Activated CD8-positive, alpha-beta T cell treated with anti-CD3 and anti-CD28 coated beads for 36 hours (primary cell): ENCODE measurements at regions of chr11 and their contacts with region 1.

Region 1: DNA sequence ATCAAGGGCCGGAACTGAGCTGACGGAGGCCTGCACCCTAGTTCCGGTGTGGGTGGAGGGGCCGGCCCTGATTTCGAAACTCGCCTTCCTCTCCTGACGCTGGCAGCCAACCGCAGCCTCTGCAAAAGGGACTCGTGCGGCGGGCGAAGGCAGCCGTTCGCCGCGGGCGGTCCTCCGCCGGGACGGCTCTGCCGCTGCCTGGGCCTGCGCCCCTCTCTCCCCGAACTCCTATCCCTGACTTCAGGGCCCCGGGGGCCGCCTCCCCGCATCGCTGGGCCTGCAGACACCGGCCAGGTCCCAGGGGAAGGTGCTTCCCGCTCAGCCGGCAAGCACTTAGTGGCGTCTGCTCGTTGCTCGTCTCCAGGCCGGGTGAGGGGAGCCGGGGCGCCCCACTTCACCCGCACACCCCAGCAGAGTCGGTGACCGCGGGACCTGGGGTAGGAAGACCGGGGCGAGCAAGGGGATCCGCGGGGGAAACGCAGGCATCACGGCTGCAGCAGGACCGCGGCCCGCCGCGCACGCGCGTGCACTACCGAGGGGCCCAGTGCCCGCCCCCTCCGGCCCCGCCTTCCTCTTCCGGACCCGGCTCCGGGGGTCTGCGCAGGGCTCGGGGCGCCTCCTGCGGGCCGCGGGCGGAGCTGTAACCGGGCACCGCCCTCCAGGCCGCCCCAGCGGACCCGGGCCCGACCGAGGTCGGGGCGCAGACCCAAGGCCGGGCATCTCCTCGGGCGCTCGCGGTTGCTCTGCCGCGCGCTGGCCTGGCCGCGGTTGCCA is 464 bp upstream of the ANKRD13D start:
- DNase-seq: peak; percentile 95
- ATAC-seq: peak; percentile 77
- H3K4me3 Mint-ChIP-seq: peak overlapping the region; percentile 72
- H3K27ac Mint-ChIP-seq: peak overlapping the region; percentile 99
- H3K4me1 Mint-ChIP-seq: peaks cover 58% of the 10 kb centered on the region
- H3K27me3 Mint-ChIP-seq: no peaks in the 10 kb centered on the region
- CTCF ChIP-seq: peak; percentile 41

Region 2: GRCh38 chr11:67213178-67213621 is 75.4 kb before region 1 on chr11:
- CTCF ChIA-PET with region 1: no interaction called
- POLR2A ChIA-PET with region 1: no interaction called
- intact Hi-C with region 1: no loop called
- DNase-seq: no peak
- ATAC-seq: no peak
- H3K4me3 Mint-ChIP-seq: no peak overlapping the region
- H3K27ac Mint-ChIP-seq: no peak overlapping the region
- H3K4me1 Mint-ChIP-seq: peaks cover 12% of the 10 kb centered on the region
- H3K27me3 Mint-ChIP-seq: no peaks in the 10 kb centered on the region
- CTCF ChIP-seq: no peak

Region 3: DNA sequence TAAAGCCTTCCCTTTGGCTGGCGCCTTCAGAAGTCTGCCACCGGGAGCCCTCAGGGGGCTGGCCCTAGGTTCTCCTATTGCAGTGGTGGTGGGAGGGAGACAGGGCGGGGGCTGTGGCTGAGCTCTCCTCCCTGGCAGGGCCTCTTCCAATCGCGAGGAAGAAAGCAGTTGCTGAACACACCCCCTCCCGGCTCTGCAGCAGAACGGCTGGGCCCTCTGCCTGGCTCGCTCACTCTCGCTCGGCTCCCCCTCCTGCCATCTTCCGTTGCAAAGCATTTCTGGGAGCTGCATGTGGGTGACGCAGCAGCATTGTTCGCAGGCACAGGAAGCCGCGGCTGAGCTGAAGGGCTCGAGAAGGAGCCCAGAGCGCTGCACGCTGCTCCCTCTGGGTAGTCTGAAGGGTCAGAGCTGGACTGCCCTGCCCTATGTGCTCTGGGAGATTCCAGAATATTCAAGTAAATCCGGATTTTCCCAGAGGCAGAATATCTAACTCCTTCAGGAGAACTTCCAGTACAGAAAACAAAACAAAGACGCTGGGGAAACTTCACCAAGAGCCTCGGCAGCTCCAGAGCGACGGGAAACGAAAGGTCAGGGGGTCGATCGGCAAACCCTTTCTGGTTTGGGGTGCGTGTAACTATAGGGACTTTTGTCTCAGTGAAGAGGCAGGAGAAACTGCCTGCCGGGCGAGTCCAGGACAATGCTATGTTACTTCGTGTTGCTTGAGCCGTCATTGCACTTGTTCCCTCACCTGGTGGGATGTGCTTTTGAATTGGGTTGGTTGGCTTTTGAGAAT is 48.7 kb before region 1 on chr11:
- CTCF ChIA-PET with region 1: interaction called, 5 read pairs
- POLR2A ChIA-PET with region 1: interaction called, 19 read pairs
- intact Hi-C with region 1: no loop called
- DNase-seq: peak; percentile 98
- ATAC-seq: peak; percentile 94
- H3K4me3 Mint-ChIP-seq: peak overlapping the region; percentile 96
- H3K27ac Mint-ChIP-seq: peak overlapping the region; percentile 100
- H3K4me1 Mint-ChIP-seq: peaks cover 43% of the 10 kb centered on the region
- H3K27me3 Mint-ChIP-seq: no peaks in the 10 kb centered on the region
- CTCF ChIP-seq: no peak

Region 4: GRCh38 chr11:67277231-67277961 is 11.2 kb before region 1 on chr11:
- CTCF ChIA-PET with region 1: interaction called, 55 read pairs
- POLR2A ChIA-PET with region 1: interaction called, 308 read pairs
- intact Hi-C with region 1: no loop called
- DNase-seq: peak; percentile 96
- ATAC-seq: peak; percentile 85
- H3K4me3 Mint-ChIP-seq: peak overlapping the region; percentile 71
- H3K27ac Mint-ChIP-seq: peak overlapping the region; percentile 97
- H3K4me1 Mint-ChIP-seq: peaks cover 53% of the 10 kb centered on the region
- H3K27me3 Mint-ChIP-seq: no peaks in the 10 kb centered on the region
- CTCF ChIP-seq: no peak

Region 5: DNA sequence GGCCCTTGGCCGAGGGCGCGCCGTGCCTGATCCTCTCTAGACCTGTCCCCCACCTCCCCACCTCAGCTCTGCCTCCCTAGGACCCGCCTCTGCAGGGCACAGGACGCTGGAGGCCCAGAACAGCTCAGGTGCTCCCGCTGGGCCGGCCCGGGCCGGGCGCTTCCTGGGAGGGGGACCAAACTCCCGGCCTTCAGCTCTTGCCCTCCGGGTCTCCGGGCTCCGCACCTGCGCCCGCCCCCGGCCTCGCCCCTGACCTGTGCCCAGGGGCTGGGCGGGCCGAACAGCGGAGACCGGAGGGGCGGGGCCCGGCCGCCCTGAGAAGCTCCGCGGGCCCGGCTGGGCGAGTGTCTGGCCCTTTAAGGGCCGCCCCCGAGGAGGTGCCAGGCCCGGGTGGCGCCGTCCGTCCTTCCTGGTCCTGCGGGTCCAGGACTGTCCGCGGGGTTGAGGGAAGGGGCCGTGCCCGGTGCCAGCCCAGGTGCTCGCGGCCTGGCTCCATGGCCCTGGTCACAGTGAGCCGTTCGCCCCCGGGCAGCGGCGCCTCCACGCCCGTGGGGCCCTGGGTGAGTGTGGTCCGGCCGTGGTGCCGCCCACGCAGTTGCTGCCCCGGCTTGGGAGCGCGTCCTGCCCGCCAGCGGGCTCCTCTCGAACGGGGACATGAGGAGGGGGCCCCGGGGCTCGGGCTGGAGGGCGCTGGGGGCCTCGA is 14.6 kb after region 1 on chr11 and contains the start of gene SSH3:
- CTCF ChIA-PET with region 1: interaction called, 4 read pairs
- POLR2A ChIA-PET with region 1: interaction called, 88 read pairs
- intact Hi-C with region 1: no loop called
- DNase-seq: peak; percentile 57
- ATAC-seq: peak; percentile 84
- H3K4me3 Mint-ChIP-seq: peak within 1 kb of the TSS; percentile 59
- H3K27ac Mint-ChIP-seq: no peak within 1 kb of the TSS
- H3K4me1 Mint-ChIP-seq: peaks cover 12% of the 10 kb centered on the region
- H3K27me3 Mint-ChIP-seq: no peaks in the 10 kb centered on the region
- CTCF ChIP-seq: no peak
- total RNA-seq, gene SSH3: 7.4 to 9.1 TPM

Region 6: DNA sequence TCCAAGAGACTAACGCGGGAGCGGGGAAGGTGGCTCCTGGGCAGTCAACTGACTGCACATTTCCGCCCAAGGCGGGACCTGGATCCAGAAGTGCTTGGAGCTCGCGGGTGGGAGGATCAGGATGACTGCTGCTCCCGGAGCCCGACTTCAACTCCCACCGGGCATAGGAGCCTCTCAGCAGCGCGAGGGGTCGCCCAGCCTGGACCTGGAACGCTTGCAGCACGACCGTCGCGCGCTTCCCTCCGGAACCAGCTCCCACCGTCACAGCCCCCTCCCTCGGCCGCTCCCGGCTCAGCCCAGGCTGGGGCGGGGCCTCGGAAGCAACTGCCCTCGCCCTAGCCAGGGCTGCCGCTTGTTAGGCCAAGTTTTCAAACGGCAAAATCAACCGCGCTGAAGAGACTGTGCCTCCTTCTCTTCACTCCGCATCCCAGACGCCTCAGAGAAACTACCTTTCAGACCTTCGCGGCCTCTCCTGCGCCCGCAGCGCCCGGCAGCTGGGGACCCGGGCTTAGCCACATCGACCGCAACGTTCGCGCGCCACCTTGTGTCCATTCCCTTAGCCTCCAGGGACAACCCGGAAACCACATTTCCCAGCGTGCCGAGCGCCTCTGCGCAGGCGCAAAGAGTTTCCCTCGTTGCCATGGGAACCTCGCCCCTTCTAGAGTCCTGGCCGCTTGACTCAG is 28.7 kb after region 1 on chr11:
- CTCF ChIA-PET with region 1: interaction called, 10 read pairs
- POLR2A ChIA-PET with region 1: interaction called, 21 read pairs
- intact Hi-C with region 1: no loop called
- DNase-seq: peak; percentile 98
- ATAC-seq: peak; percentile 91
- H3K4me3 Mint-ChIP-seq: peak overlapping the region; percentile 94
- H3K27ac Mint-ChIP-seq: peak overlapping the region; percentile 97
- H3K4me1 Mint-ChIP-seq: peaks cover 16% of the 10 kb centered on the region
- H3K27me3 Mint-ChIP-seq: no peaks in the 10 kb centered on the region
- CTCF ChIP-seq: peak; percentile 82

Region 7: DNA sequence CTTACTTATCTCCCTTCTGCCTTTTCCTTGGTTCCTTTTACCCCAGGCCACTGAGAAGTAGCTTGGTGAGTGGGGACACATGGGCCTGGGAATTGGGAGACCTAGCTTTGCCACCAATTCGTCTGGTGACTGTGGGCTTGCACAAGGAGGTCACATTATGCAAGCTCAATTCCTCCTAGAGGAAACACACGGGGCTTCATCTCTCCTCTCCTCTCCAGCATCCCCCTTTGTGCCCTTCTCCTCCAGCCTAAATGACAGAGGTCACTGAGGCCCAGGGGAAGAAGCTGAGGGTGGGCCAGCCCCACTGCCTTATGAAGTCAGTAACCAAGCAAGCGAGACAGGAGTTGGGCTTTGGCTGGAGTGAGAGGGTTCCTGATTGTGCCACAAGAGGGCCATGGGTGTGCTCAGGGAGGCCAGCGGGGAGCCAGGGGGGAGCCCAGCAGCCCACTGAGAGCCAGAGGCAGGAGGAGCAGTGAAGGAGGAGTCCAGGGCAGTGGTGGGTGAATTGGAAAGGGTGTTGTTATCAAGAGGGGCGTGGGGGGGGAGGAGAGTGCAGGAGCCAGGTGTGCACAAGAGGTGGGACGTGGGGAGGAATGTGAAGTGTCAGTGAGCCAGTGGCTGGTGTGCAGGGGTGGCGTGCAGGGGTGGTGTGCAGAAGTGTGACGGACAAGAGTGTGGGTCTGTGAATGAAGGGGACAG is 82.7 kb after region 1 on chr11:
- CTCF ChIA-PET with region 1: no interaction called
- POLR2A ChIA-PET with region 1: no interaction called
- intact Hi-C with region 1: no loop called
- DNase-seq: peak; percentile 45
- ATAC-seq: peak; percentile 29
- H3K4me3 Mint-ChIP-seq: peak overlapping the region; percentile 56
- H3K27ac Mint-ChIP-seq: no peak overlapping the region
- H3K4me1 Mint-ChIP-seq: peaks cover 56% of the 10 kb centered on the region
- H3K27me3 Mint-ChIP-seq: peaks cover 27% of the 10 kb centered on the region
- CTCF ChIP-seq: peak; percentile 37

Region 8: GRCh38 chr11:67382276-67383136 is 93.9 kb after region 1 on chr11:
- CTCF ChIA-PET with region 1: interaction called, 10 read pairs
- POLR2A ChIA-PET with region 1: no interaction called
- intact Hi-C with region 1: no loop called
- DNase-seq: peak; percentile 90
- ATAC-seq: peak; percentile 95
- H3K4me3 Mint-ChIP-seq: no peak overlapping the region
- H3K27ac Mint-ChIP-seq: no peak overlapping the region
- H3K4me1 Mint-ChIP-seq: peaks cover 2% of the 10 kb centered on the region
- H3K27me3 Mint-ChIP-seq: no peaks in the 10 kb centered on the region
- CTCF ChIP-seq: peak; percentile 94

Region 9: DNA sequence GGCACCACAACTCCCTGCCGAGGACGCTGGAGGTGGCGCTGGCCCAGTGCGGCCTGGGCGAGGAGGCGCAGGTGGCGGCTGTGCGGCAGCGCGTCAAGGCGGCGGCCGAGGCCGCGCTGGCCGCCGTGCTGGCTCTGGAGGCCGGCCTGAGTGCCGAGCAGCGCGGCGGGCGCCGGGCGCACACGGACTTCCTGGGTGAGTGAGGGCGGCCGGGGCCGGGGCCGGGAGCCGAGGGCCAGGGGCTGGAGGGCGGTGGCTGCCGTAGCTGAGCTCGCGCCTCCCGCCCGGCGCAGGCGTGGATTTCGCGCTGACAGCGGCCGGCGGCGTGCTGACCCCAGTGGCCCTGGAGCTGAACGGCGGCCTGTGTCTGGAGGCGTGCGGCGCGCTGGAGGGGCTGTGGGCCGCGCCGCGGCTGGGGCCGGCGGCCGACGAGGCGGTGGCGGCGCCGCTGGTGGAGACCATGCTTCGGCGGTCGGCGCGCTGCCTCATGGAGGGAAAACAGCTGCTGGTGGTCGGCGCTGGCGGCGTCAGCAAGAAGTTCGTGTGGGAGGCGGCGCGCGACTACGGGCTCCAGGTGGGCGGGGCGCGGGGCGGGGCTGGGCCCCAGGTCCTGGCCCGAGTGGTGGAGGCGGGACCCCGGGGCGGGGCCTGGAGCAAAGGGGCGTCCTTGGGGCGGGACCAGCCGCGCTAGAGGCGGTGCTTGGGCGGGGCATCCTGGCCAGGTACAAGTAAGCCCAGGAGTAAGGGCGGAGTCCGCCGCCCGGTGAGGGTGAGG is 132.2 kb after region 1 on chr11:
- CTCF ChIA-PET with region 1: no interaction called
- POLR2A ChIA-PET with region 1: no interaction called
- intact Hi-C with region 1: no loop called
- DNase-seq: peak; percentile 99
- ATAC-seq: peak; percentile 91
- H3K4me3 Mint-ChIP-seq: peak overlapping the region; percentile 82
- H3K27ac Mint-ChIP-seq: peak overlapping the region; percentile 84
- H3K4me1 Mint-ChIP-seq: peaks cover 48% of the 10 kb centered on the region
- H3K27me3 Mint-ChIP-seq: no peaks in the 10 kb centered on the region
- CTCF ChIP-seq: no peak